ENCODE measurements at regions of chr14 and their contacts with region 1.

Region 1: GRCh38 chr14:24431569-24432258 is 2.0 kb downstream of the KHNYN start:
- DNase-seq: peak; percentile 88
- H3K4me3 ChIP-seq: peak overlapping the region; percentile 66
- CTCF ChIP-seq: peak; percentile 98

Region 2: DNA sequence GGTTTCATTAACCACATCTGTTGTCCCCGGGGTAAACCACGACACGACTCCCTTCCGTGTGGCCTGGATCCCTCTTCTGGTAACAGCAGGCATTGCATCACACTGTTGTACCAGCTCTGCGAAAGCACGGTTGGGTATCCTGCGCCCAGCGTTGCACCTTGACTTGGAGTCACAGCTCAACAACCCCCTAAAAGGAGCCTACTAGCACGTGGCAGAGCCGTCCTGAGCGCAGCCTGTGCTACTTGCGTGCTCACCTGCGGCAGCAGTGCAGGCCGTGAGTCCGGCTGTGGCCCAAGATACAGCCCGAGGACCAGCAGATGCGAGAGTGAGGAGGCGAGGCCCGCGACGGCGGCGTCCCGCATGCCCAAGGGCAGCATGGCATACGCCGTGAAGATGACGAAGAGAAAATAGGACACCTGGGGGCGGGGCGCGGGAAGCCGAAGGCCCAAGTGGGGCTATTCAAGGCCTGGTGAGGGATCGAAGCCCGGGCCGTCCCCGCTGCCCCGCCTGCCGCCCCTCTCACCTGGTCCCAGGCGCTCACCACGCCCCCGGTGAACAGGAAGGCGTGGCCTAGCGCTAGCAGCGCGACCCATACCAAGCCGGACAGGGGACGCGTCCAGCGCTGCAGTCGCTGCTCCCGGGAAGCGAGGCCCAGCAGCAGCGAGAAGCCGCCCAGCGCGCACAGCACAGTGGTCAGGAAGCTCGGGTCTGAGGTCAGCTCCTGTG is 99.3 kb before region 1 on chr14:
- in situ Hi-C with region 1: loop called (anchors 10 kb)
- DNase-seq: peak; percentile 41
- H3K4me3 ChIP-seq: peak overlapping the region; percentile 17
- CTCF ChIP-seq: peak; percentile 85